Heart right ventricle (tissue), 16 donors: ENCODE measurements at regions of chr5 and their contacts with region 1.

Region 1: DNA sequence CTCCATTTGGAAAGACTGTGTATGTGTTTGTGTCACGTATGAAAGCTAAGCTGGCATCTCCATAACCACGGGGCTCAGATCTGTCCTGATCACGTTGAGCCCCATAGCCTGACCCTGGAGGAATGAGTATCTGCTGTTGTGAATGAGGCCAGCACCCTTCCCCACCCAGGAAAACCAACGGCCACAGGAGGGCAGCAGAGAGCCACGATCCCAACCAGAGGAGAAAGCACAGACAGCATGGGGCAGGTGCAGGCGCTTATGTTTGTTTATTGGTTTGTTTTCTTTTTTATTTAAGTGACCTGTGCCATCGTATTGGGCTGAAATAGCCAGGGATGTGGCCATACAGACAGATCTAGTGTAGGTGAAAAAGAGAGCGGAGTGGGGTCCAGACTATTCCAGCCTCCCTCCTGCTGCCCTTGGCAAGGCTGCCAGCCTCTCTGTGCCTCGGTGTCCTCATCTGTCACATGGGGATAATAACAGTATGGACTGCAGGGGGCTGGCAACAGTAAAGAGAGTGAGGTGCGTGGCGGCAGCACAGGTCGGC is 12.0 kb downstream of the OR2V2 start:
- DNase-seq: peak; percentile 82 to 88
- ATAC-seq: peak; percentile 85 to 96 (median 90)
- H3K4me3 ChIP-seq: no peak overlapping the region
- H3K27ac ChIP-seq: no peak overlapping the region
- H3K4me1 ChIP-seq: peaks cover 0 to 15% (median 5%) of the 10 kb centered on the region in 9 donors
- H3K27me3 ChIP-seq: peaks cover 0 to 41% (median 6%) of the 10 kb centered on the region in 7 donors
- CTCF ChIP-seq: peak; percentile 69 to 93 (median 87)

Region 2: GRCh38 chr5:180631509-180632395 is 527.6 kb before region 1 on chr5:
- intact Hi-C with region 1: no loop called
- DNase-seq: no peak
- ATAC-seq: no peak
- H3K4me3 ChIP-seq: no peak overlapping the region
- H3K27ac ChIP-seq: no peak overlapping the region
- H3K4me1 ChIP-seq: peaks cover 0 to 24% (median 0%) of the 10 kb centered on the region in 9 donors
- H3K27me3 ChIP-seq: peaks cover 0 to 11% (median 0%) of the 10 kb centered on the region in 7 donors
- CTCF ChIP-seq: no peak

Region 3: GRCh38 chr5:181043285-181044092 is 115.9 kb before region 1 on chr5:
- intact Hi-C with region 1: loop called in 3 of 10 experiments (anchors 5 to 10 kb)
- DNase-seq: no peak
- ATAC-seq: peak in 7 of 8 donors; percentile 35 to 60 (median 45)
- H3K4me3 ChIP-seq: peak overlapping the region in 9 of 10 donors; percentile 4 to 62 (median 48)
- H3K27ac ChIP-seq: peak overlapping the region; percentile 14 to 93 (median 86)
- H3K4me1 ChIP-seq: peaks cover 0 to 24% (median 4%) of the 10 kb centered on the region in 9 donors
- H3K27me3 ChIP-seq: peaks cover 0 to 46% (median 33%) of the 10 kb centered on the region in 7 donors
- CTCF ChIP-seq: peak in 5 of 9 donors; percentile 24 to 47 (median 33)

Region 4: GRCh38 chr5:181052672-181053487 is 106.5 kb before region 1 on chr5:
- intact Hi-C with region 1: loop called in 3 of 10 experiments (anchors 10 kb)
- DNase-seq: peak; percentile 36 to 38
- ATAC-seq: peak in 7 of 8 donors; percentile 38 to 65 (median 48)
- H3K4me3 ChIP-seq: peak overlapping the region; percentile 40 to 68 (median 54)
- H3K27ac ChIP-seq: peak overlapping the region; percentile 65 to 92 (median 82)
- H3K4me1 ChIP-seq: peaks cover 0 to 61% (median 32%) of the 10 kb centered on the region in 9 donors
- H3K27me3 ChIP-seq: peaks cover 13 to 96% (median 89%) of the 10 kb centered on the region in 7 donors
- CTCF ChIP-seq: no peak

Region 5: DNA sequence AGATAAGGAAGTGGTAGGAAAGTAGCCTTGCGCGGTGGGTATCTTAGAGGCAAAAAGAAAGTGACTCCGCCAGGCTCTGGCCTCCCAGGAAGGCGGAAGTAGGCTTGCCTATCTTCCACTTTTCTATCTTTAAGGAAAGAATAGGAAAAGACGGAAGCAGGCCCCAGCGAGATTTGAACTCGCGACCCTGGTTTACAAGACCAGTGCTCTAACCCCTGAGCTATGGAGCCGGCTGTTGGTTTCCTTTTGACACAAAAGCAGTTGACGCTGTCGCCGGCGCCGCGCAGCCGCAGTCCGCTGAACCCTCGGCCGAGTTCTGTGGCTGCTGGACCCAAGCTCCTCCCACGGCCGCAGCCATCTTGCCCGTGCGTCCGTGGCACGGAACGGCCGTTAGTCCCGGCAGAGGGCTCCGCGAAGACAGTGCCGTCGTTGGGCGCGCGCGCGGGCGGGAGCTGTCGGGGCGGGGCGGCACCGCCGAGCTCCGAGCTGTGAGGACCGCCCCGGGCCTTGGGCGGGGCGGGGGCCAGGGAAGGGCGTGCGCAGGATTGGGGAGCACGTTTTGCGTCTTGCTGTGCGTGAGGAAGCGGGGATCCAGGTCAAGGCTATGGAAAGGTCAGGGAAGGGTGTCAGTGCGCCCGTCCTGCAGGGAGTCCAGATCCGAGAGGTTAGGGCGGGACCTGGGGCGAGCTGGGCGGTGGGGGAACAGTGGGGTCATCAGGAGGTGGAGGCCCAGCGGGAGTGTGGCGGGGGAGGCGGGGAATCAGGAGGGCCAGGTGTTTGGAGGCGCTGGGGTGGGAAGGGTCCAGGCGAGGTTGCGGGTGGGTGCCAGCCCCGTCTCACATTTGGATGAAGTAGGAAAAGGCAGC is 32.4 kb after region 1 on chr5:
- intact Hi-C with region 1: no loop called
- DNase-seq: peak; percentile 94 to 96
- ATAC-seq: peak; percentile 79 to 90 (median 82)
- H3K4me3 ChIP-seq: peak overlapping the region; percentile 66 to 96 (median 81)
- H3K27ac ChIP-seq: peak overlapping the region; percentile 84 to 96 (median 92)
- H3K4me1 ChIP-seq: peaks cover 3 to 51% (median 24%) of the 10 kb centered on the region in 9 donors
- H3K27me3 ChIP-seq: peaks cover 0 to 5% (median 0%) of the 10 kb centered on the region in 7 donors
- CTCF ChIP-seq: peak in 3 of 9 donors; percentile 19 to 33 (median 23)